ENCODE measurements at regions of chr10 and their contacts with region 1.

Region 1: GRCh38 chr10:114703377-114704107 is 45.5 kb upstream of the ABLIM1 start:
- DNase-seq: peak in 1 of 2 experiments; percentile 48
- H3K4me3 ChIP-seq: no peak overlapping the region
- H3K27ac ChIP-seq: no peak overlapping the region
- H3K4me1 ChIP-seq: no peaks in the 10 kb centered on the region
- H3K27me3 ChIP-seq: no peaks in the 10 kb centered on the region
- CTCF ChIP-seq: peak in 2 of 3 experiments; percentile 68 to 74; a peak in 3 of 4 replicates
- EP300 ChIP-seq: no peak
- POLR2A ChIP-seq: no peak
- RAD21 ChIP-seq: peak; percentile 86 to 88

Region 2: GRCh38 chr10:114526504-114527238 is 176.9 kb before region 1 on chr10:
- CTCF ChIA-PET with region 1: no interaction called
- POLR2A ChIA-PET with region 1: no interaction called
- DNase-seq: peak; percentile 77 to 83
- H3K4me3 ChIP-seq: peak overlapping the region; percentile 45 to 73 (median 66)
- H3K27ac ChIP-seq: peak overlapping the region; percentile 26
- H3K4me1 ChIP-seq: peaks cover 3 to 23% (median 9%) of the 10 kb centered on the region in 4 experiments; a peak in 5 of 7 replicates
- H3K27me3 ChIP-seq: no peaks in the 10 kb centered on the region
- CTCF ChIP-seq: no peak
- EP300 ChIP-seq: peak in 1 of 2 experiments; percentile 97; a peak in 2 of 3 replicates
- POLR2A ChIP-seq: peak; percentile 66 to 91
- RAD21 ChIP-seq: no peak

Region 3: GRCh38 chr10:114663626-114664025 is 39.9 kb before region 1 on chr10:
- CTCF ChIA-PET with region 1: interaction called, 10 read pairs
- POLR2A ChIA-PET with region 1: no interaction called
- DNase-seq: no peak
- H3K4me3 ChIP-seq: no peak overlapping the region
- H3K27ac ChIP-seq: no peak overlapping the region
- H3K4me1 ChIP-seq: peaks cover 0 to 14% (median 10%) of the 10 kb centered on the region in 4 experiments; a peak in 5 of 7 replicates
- H3K27me3 ChIP-seq: no peaks in the 10 kb centered on the region
- CTCF ChIP-seq: no peak
- EP300 ChIP-seq: no peak
- POLR2A ChIP-seq: no peak
- RAD21 ChIP-seq: no peak

Region 4: GRCh38 chr10:114714281-114714741 is 10.8 kb after region 1 on chr10:
- CTCF ChIA-PET with region 1: interaction called, 22 read pairs
- POLR2A ChIA-PET with region 1: no interaction called
- DNase-seq: no peak
- H3K4me3 ChIP-seq: no peak overlapping the region
- H3K27ac ChIP-seq: no peak overlapping the region
- H3K4me1 ChIP-seq: peaks cover 0 to 7% (median 3%) of the 10 kb centered on the region in 4 experiments; a peak in 2 of 7 replicates
- H3K27me3 ChIP-seq: no peaks in the 10 kb centered on the region
- CTCF ChIP-seq: no peak
- EP300 ChIP-seq: no peak
- POLR2A ChIP-seq: no peak
- RAD21 ChIP-seq: no peak

Measured in H1 (cell line).